ENCODE measurements at regions of chr4 and their contacts with region 1.

Region 1: GRCh38 chr4:39697740-39698423 is at the start of gene UBE2K:
- DNase-seq: peak; percentile 86 to 93
- ATAC-seq: peak; percentile 97 to 100 (median 98)
- H3K4me3 ChIP-seq: peak within 1 kb of the TSS; percentile 69 to 95 (median 80)
- H3K27ac ChIP-seq: peak within 1 kb of the TSS; percentile 51 to 99 (median 95)
- H3K4me1 ChIP-seq: peaks cover 0 to 49% (median 33%) of the 10 kb centered on the region in 9 donors
- H3K27me3 ChIP-seq: no peaks in the 10 kb centered on the region
- CTCF ChIP-seq: peak in 2 of 9 donors; percentile 6 to 14
- total RNA-seq, gene UBE2K: 52.9 to 74.0 (median 57.7) TPM

Region 2: GRCh38 chr4:39638354-39639240 is 59.3 kb before region 1 on chr4 and contains the start of gene SMIM14:
- intact Hi-C with region 1: loop called in 4 of 10 experiments (anchors 2 to 5 kb)
- DNase-seq: peak; percentile 98 to 99
- ATAC-seq: peak; percentile 97 to 100 (median 98)
- H3K4me3 ChIP-seq: peak within 1 kb of the TSS; percentile 80 to 95 (median 92)
- H3K27ac ChIP-seq: peak within 1 kb of the TSS; percentile 86 to 99 (median 98)
- H3K4me1 ChIP-seq: peaks cover 0 to 35% (median 27%) of the 10 kb centered on the region in 9 donors
- H3K27me3 ChIP-seq: no peaks in the 10 kb centered on the region
- CTCF ChIP-seq: peak in 4 of 9 donors; percentile 24 to 35 (median 27)
- total RNA-seq, gene SMIM14: 9.3 to 15.2 (median 11.8) TPM

Region 3: DNA sequence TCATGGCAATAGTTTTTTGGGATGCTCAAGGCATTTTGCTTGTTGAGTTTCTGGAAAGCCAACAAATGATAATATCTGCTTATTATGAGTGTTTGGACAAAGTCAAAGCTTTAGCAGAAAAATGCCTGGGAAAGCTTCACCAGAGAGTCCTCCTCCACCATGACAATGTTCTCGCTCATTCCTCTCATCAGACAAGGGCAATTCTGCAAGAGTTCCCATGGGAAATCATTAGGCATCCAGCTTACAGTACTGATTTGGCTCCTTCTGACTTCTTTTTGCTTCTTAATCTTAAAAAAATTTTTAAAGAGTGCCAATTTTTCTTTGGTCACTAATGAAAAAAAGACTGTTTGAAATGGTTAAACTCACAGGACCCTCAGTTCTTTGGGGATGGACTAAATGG is 136.4 kb after region 1 on chr4:
- intact Hi-C with region 1: loop called in 6 of 10 experiments (anchors 5 to 10 kb)
- DNase-seq: no peak
- ATAC-seq: no peak
- H3K4me3 ChIP-seq: no peak overlapping the region
- H3K27ac ChIP-seq: no peak overlapping the region
- H3K4me1 ChIP-seq: peaks cover 0 to 8% (median 0%) of the 10 kb centered on the region in 9 donors
- H3K27me3 ChIP-seq: no peaks in the 10 kb centered on the region
- CTCF ChIP-seq: no peak

Region 4: DNA sequence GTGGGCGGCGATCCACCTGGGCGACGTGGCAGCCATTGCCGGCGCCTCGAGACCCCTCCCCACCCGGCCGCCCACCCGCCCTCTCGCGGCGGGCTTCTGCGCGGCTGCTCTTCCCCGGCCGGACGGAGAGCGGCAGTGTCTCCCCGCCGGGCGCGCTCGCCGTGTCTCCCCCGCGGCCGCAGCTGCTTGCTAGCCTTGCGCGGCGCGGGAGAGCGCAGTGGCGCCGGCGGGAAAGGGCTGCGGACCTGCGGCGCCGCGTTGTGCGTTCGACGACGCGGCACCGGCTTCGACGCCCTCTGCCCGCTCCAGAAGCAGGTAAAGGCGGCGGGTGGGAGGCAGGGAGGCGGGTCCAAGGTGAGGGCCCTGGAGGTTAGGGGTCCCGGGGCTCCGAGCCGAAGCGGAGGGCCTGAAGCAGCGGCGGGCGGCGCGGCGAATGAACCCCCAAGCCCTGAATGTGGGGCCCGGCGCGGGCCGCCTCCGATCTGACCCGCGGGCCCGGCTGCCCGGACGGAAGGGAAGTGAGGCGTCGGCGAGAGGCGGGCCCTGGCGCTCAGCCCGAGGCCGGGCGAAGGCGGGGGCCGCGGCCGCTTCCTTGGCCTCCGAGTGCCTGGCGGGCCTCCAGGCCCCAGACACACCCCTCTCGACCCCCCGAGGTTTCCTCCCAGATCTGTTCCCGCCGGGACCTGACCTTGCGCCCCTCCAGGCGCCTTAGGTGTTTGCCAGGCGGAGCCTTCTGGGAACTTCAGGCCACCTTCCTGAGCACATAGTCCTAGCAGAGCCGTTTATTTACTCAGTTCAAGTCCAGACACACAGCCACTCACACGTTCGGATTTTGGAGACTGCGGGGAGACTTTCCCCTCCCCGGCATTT is 359.1 kb after region 1 on chr4 and contains the start of gene N4BP2:
- intact Hi-C with region 1: loop called in 4 of 10 experiments (anchors 2 to 5 kb)
- DNase-seq: peak; percentile 81 to 87
- ATAC-seq: peak; percentile 81 to 92 (median 89)
- H3K4me3 ChIP-seq: peak within 1 kb of the TSS; percentile 57 to 99 (median 94)
- H3K27ac ChIP-seq: peak within 1 kb of the TSS; percentile 98 to 100 (median 100)
- H3K4me1 ChIP-seq: peaks cover 0 to 27% (median 15%) of the 10 kb centered on the region in 9 donors
- H3K27me3 ChIP-seq: no peaks in the 10 kb centered on the region
- CTCF ChIP-seq: peak; percentile 46 to 96 (median 79)
- total RNA-seq, gene N4BP2: 3.0 to 6.9 (median 5.4) TPM